ENCODE measurements at regions of chr16 and their contacts with region 1.

Region 1: GRCh38 chr16:74309789-74310781 is 13.5 kb downstream of the PSMD7 start:
- DNase-seq: peak; percentile 62
- H3K4me3 Mint-ChIP-seq: no peak overlapping the region
- H3K27ac Mint-ChIP-seq: no peak overlapping the region
- H3K4me1 Mint-ChIP-seq: no peaks in the 10 kb centered on the region
- H3K27me3 Mint-ChIP-seq: no peaks in the 10 kb centered on the region
- CTCF ChIP-seq: peak; percentile 72

Region 2: GRCh38 chr16:74252329-74252728 is 57.8 kb before region 1 on chr16:
- CTCF ChIA-PET with region 1: no interaction called
- POLR2A ChIA-PET with region 1: no interaction called
- intact Hi-C with region 1: no loop called
- DNase-seq: no peak
- H3K4me3 Mint-ChIP-seq: no peak overlapping the region
- H3K27ac Mint-ChIP-seq: no peak overlapping the region
- H3K4me1 Mint-ChIP-seq: no peaks in the 10 kb centered on the region
- H3K27me3 Mint-ChIP-seq: peaks cover 15% of the 10 kb centered on the region
- CTCF ChIP-seq: no peak

Region 3: GRCh38 chr16:74296432-74297144 is 13.5 kb before region 1 on chr16 and contains the start of gene PSMD7:
- CTCF ChIA-PET with region 1: interaction called, 26 read pairs
- POLR2A ChIA-PET with region 1: interaction called, 20 read pairs
- intact Hi-C with region 1: no loop called
- DNase-seq: peak; percentile 92
- H3K4me3 Mint-ChIP-seq: peak within 1 kb of the TSS; percentile 84
- H3K27ac Mint-ChIP-seq: peak within 1 kb of the TSS; percentile 98
- H3K4me1 Mint-ChIP-seq: peaks cover 7% of the 10 kb centered on the region
- H3K27me3 Mint-ChIP-seq: no peaks in the 10 kb centered on the region
- CTCF ChIP-seq: no peak
- total RNA-seq, gene PSMD7: 141 and 172 TPM in 2 replicates

Region 4: DNA sequence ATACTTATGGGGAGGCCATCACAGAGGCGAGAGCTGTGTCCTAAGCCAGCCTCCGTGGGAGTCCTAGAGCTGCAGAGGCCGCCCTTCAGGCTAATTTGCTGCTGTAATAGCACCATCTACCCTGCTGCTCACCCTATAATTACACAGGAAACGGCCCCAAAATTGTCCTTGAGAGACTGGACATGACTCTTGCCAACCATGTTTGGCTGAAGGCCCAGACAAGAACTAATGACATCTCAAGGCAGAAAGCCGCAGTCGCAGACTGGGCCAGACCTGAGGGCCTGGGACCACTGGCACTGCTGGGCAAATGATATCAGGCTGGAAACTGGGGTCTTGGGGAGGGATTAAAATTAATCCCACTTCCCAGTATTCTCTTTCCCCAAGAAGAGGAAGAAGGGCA is 10.6 kb after region 1 on chr16:
- CTCF ChIA-PET with region 1: interaction called, 15 read pairs
- POLR2A ChIA-PET with region 1: interaction called, 4 read pairs
- intact Hi-C with region 1: no loop called
- DNase-seq: no peak
- H3K4me3 Mint-ChIP-seq: no peak overlapping the region
- H3K27ac Mint-ChIP-seq: no peak overlapping the region
- H3K4me1 Mint-ChIP-seq: no peaks in the 10 kb centered on the region
- H3K27me3 Mint-ChIP-seq: no peaks in the 10 kb centered on the region
- CTCF ChIP-seq: no peak

Region 5: DNA sequence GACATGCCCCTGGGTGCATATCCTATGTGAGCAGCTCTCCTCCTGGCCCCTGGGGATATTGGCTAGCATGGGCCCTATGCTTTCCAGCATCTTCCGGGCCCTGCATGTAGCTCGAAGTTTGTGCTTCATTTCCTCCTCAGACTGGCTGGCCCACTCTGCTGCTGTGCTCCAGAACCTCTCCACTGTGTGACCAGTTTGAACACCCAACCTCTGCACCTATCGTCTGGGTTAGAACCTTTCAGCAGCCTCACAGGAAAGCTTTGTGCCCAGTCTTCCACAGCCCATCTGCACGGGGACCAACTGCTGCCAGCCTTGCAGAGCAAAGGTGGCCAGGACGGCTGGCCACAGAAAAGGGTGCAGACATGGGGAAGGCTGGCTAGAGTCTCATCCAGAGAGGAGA is 121.4 kb after region 1 on chr16:
- CTCF ChIA-PET with region 1: interaction called, 10 read pairs
- POLR2A ChIA-PET with region 1: interaction called, 3 read pairs
- intact Hi-C with region 1: loop called (anchors 2 kb)
- DNase-seq: no peak
- H3K4me3 Mint-ChIP-seq: no peak overlapping the region
- H3K27ac Mint-ChIP-seq: peak overlapping the region; percentile 59
- H3K4me1 Mint-ChIP-seq: peaks cover 7% of the 10 kb centered on the region
- H3K27me3 Mint-ChIP-seq: no peaks in the 10 kb centered on the region
- CTCF ChIP-seq: no peak

Region 6: GRCh38 chr16:74623214-74623842 is 313.2 kb after region 1 on chr16:
- CTCF ChIA-PET with region 1: interaction called, 27 read pairs
- POLR2A ChIA-PET with region 1: no interaction called
- intact Hi-C with region 1: loop called (anchors 1 kb)
- DNase-seq: peak; percentile 60
- H3K4me3 Mint-ChIP-seq: no peak overlapping the region
- H3K27ac Mint-ChIP-seq: no peak overlapping the region
- H3K4me1 Mint-ChIP-seq: peaks cover 4% of the 10 kb centered on the region
- H3K27me3 Mint-ChIP-seq: no peaks in the 10 kb centered on the region
- CTCF ChIP-seq: peak; percentile 65

Measured in MCF 10A (cell line).